ENCODE measurements at regions of chr18 and their contacts with region 1.

Region 1: GRCh38 chr18:5057386-5058348 is 139.4 kb downstream of the AKAIN1 start:
- DNase-seq: peak; percentile 14 to 17
- ATAC-seq: no peak
- H3K4me3 ChIP-seq: no peak overlapping the region
- H3K27ac ChIP-seq: no peak overlapping the region
- H3K4me1 ChIP-seq: no peaks in the 10 kb centered on the region
- H3K27me3 ChIP-seq: no peaks in the 10 kb centered on the region
- CTCF ChIP-seq: peak in 4 of 5 experiments; percentile 24 to 64 (median 44)
- POLR2A ChIP-seq: no peak

Region 2: GRCh38 chr18:4106407-4107033 is 951.1 kb before region 1 on chr18:
- in situ Hi-C with region 1: loop called in 3 of 4 experiments (anchors 5 to 25 kb)
- intact Hi-C with region 1: no loop called
- DNase-seq: peak in 1 of 2 donors; percentile 15
- ATAC-seq: no peak
- H3K4me3 ChIP-seq: peak overlapping the region; percentile 14 to 40 (median 18)
- H3K27ac ChIP-seq: no peak overlapping the region
- H3K4me1 ChIP-seq: no peaks in the 10 kb centered on the region
- H3K27me3 ChIP-seq: no peaks in the 10 kb centered on the region
- CTCF ChIP-seq: peak in 4 of 5 experiments; percentile 20 to 63 (median 57)
- POLR2A ChIP-seq: no peak

Region 3: DNA sequence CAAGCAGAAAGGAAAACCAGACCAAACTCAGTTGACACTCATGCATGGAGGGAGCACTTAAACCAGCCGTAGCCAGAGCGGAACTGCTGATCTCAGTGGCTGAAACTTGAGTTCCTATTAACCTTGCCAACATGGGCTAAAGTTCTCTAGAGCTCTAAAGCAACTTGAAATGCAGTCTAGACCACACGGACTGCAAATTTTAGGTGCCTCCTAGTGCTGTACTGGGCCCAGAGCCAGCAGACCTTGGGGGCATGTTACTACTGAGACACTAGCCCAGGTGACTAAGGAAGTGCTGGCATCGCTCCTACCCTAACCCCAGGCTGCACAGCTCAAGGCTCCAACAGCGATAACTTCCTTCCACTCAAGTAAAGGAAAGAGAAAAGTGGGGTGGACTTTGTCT is 97.1 kb before region 1 on chr18:
- in situ Hi-C with region 1: no loop called
- intact Hi-C with region 1: no loop called
- DNase-seq: no peak
- ATAC-seq: no peak
- H3K4me3 ChIP-seq: no peak overlapping the region
- H3K27ac ChIP-seq: no peak overlapping the region
- H3K4me1 ChIP-seq: no peaks in the 10 kb centered on the region
- H3K27me3 ChIP-seq: no peaks in the 10 kb centered on the region
- CTCF ChIP-seq: no peak
- POLR2A ChIP-seq: no peak

Region 4: GRCh38 chr18:4987452-4988405 is 69.9 kb before region 1 on chr18:
- in situ Hi-C with region 1: no loop called
- intact Hi-C with region 1: no loop called
- DNase-seq: no peak
- ATAC-seq: no peak
- H3K4me3 ChIP-seq: no peak overlapping the region
- H3K27ac ChIP-seq: no peak overlapping the region
- H3K4me1 ChIP-seq: no peaks in the 10 kb centered on the region
- H3K27me3 ChIP-seq: no peaks in the 10 kb centered on the region
- CTCF ChIP-seq: no peak
- POLR2A ChIP-seq: no peak

Measured in gastrocnemius medialis (tissue), 4 donors.